GM13977 (cell line): ENCODE measurements at regions of chr7 and their contacts with region 1.

Region 1: GRCh38 chr7:111752022-111752582 is 189.8 kb upstream of the IMMP2L start:
- DNase-seq: peak; percentile 51
- CTCF ChIP-seq: peak; percentile 86

Region 2: GRCh38 chr7:111384065-111384893 is 367.8 kb before region 1 on chr7:
- in situ Hi-C with region 1: no loop called
- DNase-seq: no peak
- CTCF ChIP-seq: no peak

Region 3: GRCh38 chr7:112422842-112423496 is 670.9 kb after region 1 on chr7:
- in situ Hi-C with region 1: loop called (anchors 25 kb)
- DNase-seq: no peak
- CTCF ChIP-seq: no peak

Region 4: DNA sequence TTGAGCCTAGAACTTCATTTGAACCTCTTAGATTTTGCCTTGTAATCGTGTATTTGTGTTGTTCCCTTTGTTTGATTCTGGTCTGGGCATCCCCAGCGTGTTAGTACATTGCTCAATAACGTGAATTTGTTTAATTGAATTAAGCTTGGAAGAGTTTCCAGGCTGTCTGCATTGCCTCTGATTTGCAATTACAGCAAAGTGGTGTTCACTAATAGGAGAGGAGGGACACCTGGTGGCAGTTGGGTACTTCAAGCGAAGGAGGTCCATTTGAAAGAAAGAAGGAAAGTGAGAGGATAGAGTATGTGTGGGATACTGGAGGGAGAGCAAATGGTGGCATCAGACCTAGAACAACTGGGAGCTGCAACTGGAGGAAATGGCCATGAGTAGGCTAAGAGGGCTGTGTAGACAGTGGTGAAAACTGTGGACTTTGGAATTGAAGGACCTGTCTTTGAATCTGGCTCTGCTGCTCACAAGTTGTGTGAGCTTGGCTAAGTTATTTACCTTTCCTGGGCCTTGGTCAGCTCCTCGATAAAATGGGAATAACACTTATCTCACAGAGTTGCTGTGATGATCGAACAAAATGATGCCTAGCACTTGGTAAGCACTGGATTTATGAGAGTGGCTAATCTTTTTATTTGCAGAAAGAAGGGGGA is 743.8 kb after region 1 on chr7:
- in situ Hi-C with region 1: loop called (anchors 25 kb)
- DNase-seq: peak; percentile 28
- CTCF ChIP-seq: peak; percentile 74